GM13977 (cell line): ENCODE measurements at regions of chr1 and their contacts with region 1.

Region 1: GRCh38 chr1:9503001-9503675 is 36.1 kb upstream of the SLC25A33 start:
- DNase-seq: no peak
- CTCF ChIP-seq: no peak

Region 2: DNA sequence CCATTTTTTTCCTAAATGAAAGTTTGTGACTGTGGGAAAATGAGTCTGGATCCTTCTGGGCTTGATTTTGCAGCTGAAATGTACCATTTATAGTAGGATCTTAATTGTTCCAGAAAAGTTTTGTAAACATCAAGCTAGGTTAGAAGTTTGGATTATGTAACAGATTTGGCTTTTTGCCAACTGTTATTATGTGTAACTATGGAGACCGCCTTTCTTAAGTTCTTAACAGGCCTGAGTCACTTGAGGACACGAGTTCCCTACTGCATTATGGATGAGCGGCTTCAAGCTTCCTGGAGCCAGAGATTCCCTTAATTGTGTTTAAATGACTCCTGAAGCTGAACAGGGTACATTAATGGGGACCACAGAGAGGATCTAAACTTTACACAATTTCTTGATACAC is 58.3 kb after region 1 on chr1:
- in situ Hi-C with region 1: loop called (anchors 10 kb)
- DNase-seq: no peak
- CTCF ChIP-seq: no peak